ENCODE measurements at regions of chr15 and their contacts with region 1.

Region 1: GRCh38 chr15:34259566-34259965 is 34.8 kb downstream of the EMC4 start:
- DNase-seq: no peak
- ATAC-seq: no peak
- H3K4me3 ChIP-seq: no peak overlapping the region
- H3K4me3 Mint-ChIP-seq: no peak overlapping the region
- H3K27ac ChIP-seq: no peak overlapping the region
- H3K27ac Mint-ChIP-seq: peak overlapping the region; percentile 0
- H3K4me1 ChIP-seq: no peaks in the 10 kb centered on the region
- H3K4me1 Mint-ChIP-seq: peaks cover 1% of the 10 kb centered on the region
- H3K27me3 ChIP-seq: no peaks in the 10 kb centered on the region
- H3K27me3 Mint-ChIP-seq: no peaks in the 10 kb centered on the region
- CTCF ChIP-seq: no peak

Region 2: GRCh38 chr15:34297059-34297458 is 37.5 kb after region 1 on chr15:
- CTCF ChIA-PET with region 1: no interaction called
- POLR2A ChIA-PET with region 1: no interaction called
- intact Hi-C with region 1: loop called in 1 of 2 experiments (anchors 5 kb)
- DNase-seq: no peak
- ATAC-seq: no peak
- H3K4me3 ChIP-seq: no peak overlapping the region
- H3K4me3 Mint-ChIP-seq: no peak overlapping the region
- H3K27ac ChIP-seq: no peak overlapping the region
- H3K27ac Mint-ChIP-seq: peak overlapping the region; percentile 58
- H3K4me1 ChIP-seq: peaks cover 20% of the 10 kb centered on the region
- H3K4me1 Mint-ChIP-seq: peaks cover 55% of the 10 kb centered on the region
- H3K27me3 ChIP-seq: no peaks in the 10 kb centered on the region
- H3K27me3 Mint-ChIP-seq: no peaks in the 10 kb centered on the region
- CTCF ChIP-seq: no peak

Region 3: DNA sequence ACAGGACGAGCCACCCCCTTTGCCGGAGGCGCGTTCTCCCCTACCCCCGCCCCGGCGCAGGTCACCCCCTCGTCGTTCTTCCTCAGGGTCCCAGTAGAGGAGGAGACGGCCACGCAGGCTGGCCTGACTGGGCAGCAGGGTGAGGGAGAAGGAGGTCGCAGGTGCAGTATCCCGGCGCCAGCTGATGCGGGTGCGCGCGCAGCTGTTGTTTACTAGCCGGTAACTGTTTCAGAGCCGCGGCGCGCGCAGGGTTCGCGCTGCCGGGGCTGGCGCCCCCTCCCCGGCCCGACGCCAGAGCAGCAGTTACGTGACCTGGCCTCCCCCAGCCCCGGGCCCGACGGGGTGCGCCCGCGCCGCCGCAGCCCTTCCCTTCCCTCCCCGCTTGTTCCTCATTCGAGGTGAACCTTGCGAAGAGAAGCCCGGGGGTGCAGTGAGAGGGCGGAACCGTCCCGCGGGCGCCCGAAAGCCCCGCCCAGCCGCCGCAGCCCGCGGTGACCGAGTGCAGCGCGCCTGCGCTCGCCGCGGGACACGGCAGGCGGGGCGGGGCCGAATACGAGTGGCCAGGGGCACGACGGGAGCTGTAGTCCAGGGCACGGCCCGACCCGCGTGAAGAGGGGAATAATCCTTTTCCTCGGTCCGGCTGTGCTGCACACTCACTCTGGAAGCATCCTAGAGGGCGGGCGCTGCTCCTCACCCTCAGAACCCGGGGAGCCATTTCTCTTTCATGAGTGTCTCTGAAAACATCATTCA is 78.2 kb after region 1 on chr15 and contains the start of gene SLC12A6:
- CTCF ChIA-PET with region 1: interaction called, 3 read pairs
- POLR2A ChIA-PET with region 1: no interaction called
- intact Hi-C with region 1: loop called in 1 of 2 experiments (anchors 5 kb)
- DNase-seq: peak; percentile 81 to 95 (median 89)
- ATAC-seq: peak; percentile 84
- H3K4me3 ChIP-seq: peak within 1 kb of the TSS; percentile 81 to 97
- H3K4me3 Mint-ChIP-seq: peak within 1 kb of the TSS; percentile 98
- H3K27ac ChIP-seq: peak within 1 kb of the TSS; percentile 75 to 80
- H3K27ac Mint-ChIP-seq: peak within 1 kb of the TSS; percentile 97
- H3K4me1 ChIP-seq: peaks cover 55% of the 10 kb centered on the region
- H3K4me1 Mint-ChIP-seq: peaks cover 61% of the 10 kb centered on the region
- H3K27me3 ChIP-seq: no peaks in the 10 kb centered on the region
- H3K27me3 Mint-ChIP-seq: no peaks in the 10 kb centered on the region
- CTCF ChIP-seq: no peak
- total RNA-seq, gene SLC12A6: 55.7 to 60.8 TPM

Measured in CD8-positive, alpha-beta T cell (primary cell).